Common myeloid progenitor, CD34-positive (primary cell): ENCODE measurements at regions of chr11 and their contacts with region 1.

Region 1: DNA sequence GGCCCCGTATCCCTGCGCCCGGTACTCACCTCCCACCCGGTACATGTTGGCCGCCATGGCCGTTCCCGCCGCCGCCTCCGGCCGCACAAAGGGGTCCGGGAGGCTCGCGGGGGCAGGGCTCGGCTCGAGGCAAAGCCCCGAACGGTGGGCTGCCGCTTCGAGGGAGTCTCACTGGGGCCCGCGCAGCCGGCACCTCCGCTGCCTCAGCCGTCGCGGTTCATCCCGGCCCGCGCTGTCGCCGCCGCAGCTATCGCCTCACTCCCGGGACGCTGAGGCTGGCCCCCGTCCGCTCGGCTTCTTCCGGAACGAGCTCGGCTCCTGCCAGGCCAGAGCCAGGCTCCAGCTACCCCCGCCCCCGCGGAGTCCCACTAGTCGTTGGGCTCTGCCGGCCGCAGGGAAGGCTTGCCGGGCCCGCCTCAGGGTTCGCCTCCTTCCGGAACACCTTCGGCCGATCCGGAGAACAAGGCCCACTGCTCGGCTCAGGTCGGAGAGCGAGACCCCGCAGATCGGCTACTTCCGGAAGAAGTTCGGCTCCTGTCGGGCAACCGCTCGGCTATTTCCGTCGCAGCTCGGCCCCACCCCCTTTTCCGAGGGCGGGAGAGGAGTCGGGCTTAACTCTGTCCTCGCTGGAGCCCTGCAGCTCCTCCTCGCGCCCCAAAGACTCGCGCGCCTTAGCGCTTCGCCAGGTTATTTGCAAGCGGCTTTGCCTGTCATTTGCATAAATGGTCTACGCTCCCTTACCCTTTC is at the start of gene MTA2:
- DNase-seq: peak; percentile 98 to 99 (median 99)
- H3K4me3 ChIP-seq: peak within 1 kb of the TSS; percentile 71 to 97 (median 94)
- H3K27ac ChIP-seq: peak within 1 kb of the TSS; percentile 85 to 94
- H3K4me1 ChIP-seq: peaks cover 18 to 43% (median 32%) of the 10 kb centered on the region in 4 experiments
- H3K27me3 ChIP-seq: no peaks in the 10 kb centered on the region

Region 2: GRCh38 chr11:62612366-62613290 is 11.1 kb after region 1 on chr11 and contains the starts of genes EML3 and ROM1:
- CTCF ChIA-PET with region 1: interaction called, 15 read pairs
- POLR2A ChIA-PET with region 1: interaction called, 10 read pairs
- DNase-seq: peak; percentile 88 to 95 (median 94)
- H3K4me3 ChIP-seq: peak within 1 kb of the TSS; percentile 52 to 94 (median 79)
- H3K27ac ChIP-seq: peak within 1 kb of the TSS; percentile 46 to 87
- H3K4me1 ChIP-seq: peaks cover 0 to 48% (median 34%) of the 10 kb centered on the region in 4 experiments
- H3K27me3 ChIP-seq: no peaks in the 10 kb centered on the region